ENCODE measurements at regions of chr7 and their contacts with region 1.

Region 1: GRCh38 chr7:7535691-7536090 is at the start of gene COL28A1:
- DNase-seq: no peak
- H3K4me3 ChIP-seq: no peak within 1 kb of the TSS
- H3K27ac ChIP-seq: no peak within 1 kb of the TSS
- H3K4me1 ChIP-seq: no peaks in the 10 kb centered on the region
- H3K27me3 ChIP-seq: no peaks in the 10 kb centered on the region
- CTCF ChIP-seq: no peak
- POLR2A ChIP-seq: no peak
- total RNA-seq, gene COL28A1: 0.11 to 3.1 (median 0.40) TPM

Region 2: DNA sequence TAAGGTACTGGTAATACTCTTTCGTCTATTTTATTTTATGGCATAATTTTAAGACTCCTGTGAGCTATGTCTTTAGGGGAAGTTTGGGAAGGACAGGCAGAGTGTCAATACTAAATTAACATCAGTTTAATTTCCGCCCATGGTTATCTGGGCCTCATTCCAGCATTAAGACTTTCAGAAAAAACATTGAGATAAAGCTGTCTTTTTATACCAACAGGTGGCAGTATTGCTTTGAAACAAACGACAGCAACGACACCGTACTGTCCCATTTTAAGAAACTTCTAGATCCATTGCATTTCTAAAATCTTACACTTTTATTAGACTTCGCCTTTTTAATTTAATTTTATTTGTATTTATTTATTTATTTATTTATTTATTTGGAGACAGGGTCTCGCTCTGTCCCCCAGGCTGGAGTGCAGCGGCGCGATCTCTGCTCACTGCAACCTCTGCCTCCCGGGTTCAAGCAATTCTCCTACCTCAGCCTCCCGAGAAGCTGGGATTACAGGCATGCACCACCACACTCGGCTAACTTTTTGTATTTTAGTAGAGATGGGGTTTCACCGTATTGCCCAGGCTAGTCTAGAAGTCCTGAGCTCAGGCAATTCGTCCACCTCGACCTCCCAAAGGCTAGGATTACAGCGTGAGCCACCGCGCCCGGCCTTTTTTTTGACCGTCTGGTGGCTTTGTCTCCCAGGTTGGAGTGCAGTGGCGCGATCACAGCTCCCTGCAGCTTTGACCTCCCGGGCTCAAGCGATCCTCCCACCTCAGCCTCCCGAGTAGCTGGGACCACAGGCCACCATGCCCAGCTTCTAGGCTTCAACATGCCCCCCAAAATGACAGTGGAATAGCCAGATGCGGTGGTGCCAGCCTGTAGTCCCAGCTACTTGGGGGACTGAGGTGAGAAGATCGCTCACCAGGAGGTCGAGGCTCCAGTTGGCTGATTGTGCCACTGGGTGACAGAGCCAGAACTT is 432.1 kb before region 1 on chr7:
- intact Hi-C with region 1: loop called (anchors 10 kb)
- DNase-seq: no peak
- H3K4me3 ChIP-seq: peak overlapping the region in 3 of 4 donors; percentile 13 to 45 (median 21)
- H3K27ac ChIP-seq: peak overlapping the region; percentile 23 to 71 (median 62)
- H3K4me1 ChIP-seq: peaks cover 14 to 39% (median 15%) of the 10 kb centered on the region in 3 donors
- H3K27me3 ChIP-seq: no peaks in the 10 kb centered on the region
- CTCF ChIP-seq: peak in 5 of 6 experiments; percentile 53 to 75 (median 68)
- POLR2A ChIP-seq: no peak

Region 3: GRCh38 chr7:7424151-7424873 is 111.4 kb before region 1 on chr7:
- intact Hi-C with region 1: loop called (anchors 5 kb)
- DNase-seq: no peak
- H3K4me3 ChIP-seq: peak overlapping the region; percentile 7 to 69 (median 39)
- H3K27ac ChIP-seq: no peak overlapping the region
- H3K4me1 ChIP-seq: peaks cover 0 to 4% (median 0%) of the 10 kb centered on the region in 3 donors
- H3K27me3 ChIP-seq: no peaks in the 10 kb centered on the region
- CTCF ChIP-seq: peak; percentile 57 to 82 (median 68)
- POLR2A ChIP-seq: no peak

Measured in esophagus squamous epithelium (tissue), 5 donors.